Body of pancreas (tissue), 4 donors: ENCODE measurements at regions of chr10 and their contacts with region 1.

Region 1: GRCh38 chr10:29496341-29497162 is 138.2 kb downstream of the SVIL start:
- DNase-seq: peak; percentile 70 to 81 (median 76)
- ATAC-seq: peak; percentile 87
- H3K4me3 ChIP-seq: no peak overlapping the region
- H3K27ac ChIP-seq: no peak overlapping the region
- H3K4me1 ChIP-seq: no peaks in the 10 kb centered on the region
- H3K27me3 ChIP-seq: no peaks in the 10 kb centered on the region
- CTCF ChIP-seq: peak; percentile 76 to 93 (median 88)
- POLR2A ChIP-seq: no peak

Region 2: GRCh38 chr10:29377333-29377961 is 119.1 kb before region 1 on chr10:
- intact Hi-C with region 1: loop called (anchors 10 kb)
- DNase-seq: peak in 2 of 4 donors; percentile 22 to 23
- ATAC-seq: no peak
- H3K4me3 ChIP-seq: no peak overlapping the region
- H3K27ac ChIP-seq: no peak overlapping the region
- H3K4me1 ChIP-seq: peaks cover 3% of the 10 kb centered on the region
- H3K27me3 ChIP-seq: no peaks in the 10 kb centered on the region
- CTCF ChIP-seq: peak; percentile 43 to 93 (median 70)
- POLR2A ChIP-seq: no peak

Region 3: DNA sequence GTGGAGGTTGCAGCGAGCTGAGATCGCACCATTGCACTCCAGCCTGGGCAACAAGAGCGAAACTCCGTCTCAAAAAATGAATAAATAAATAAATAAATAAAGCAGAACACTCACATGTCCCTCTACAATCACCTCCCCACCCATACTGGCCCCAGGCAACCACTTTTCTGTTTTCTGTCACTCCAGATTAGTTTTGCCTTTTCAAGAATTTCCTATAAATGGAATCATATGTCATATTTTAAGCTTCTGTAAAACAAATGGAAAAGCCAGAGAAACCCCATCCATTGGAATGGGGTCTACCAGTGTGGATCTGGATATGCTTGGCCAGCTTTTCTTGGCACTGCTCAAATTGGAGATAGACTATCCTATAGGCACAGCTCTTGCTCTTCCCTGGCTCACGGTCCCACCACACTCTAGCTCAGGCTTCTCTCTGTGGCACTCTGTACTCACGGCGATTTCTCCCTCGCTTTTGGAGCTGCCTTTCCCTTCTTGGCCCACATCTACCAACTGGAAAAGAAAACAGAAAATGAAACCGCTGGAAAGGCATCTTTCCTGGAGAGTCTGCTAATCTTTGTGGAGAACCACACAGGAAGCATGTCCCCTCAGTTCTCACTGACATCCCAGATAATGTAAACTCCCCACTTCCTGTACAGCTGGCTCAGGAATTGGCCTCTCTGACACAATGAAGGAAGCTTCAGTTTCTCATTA is 352.7 kb after region 1 on chr10:
- intact Hi-C with region 1: no loop called
- DNase-seq: no peak
- ATAC-seq: no peak
- H3K4me3 ChIP-seq: no peak overlapping the region
- H3K27ac ChIP-seq: no peak overlapping the region
- H3K4me1 ChIP-seq: no peaks in the 10 kb centered on the region
- H3K27me3 ChIP-seq: no peaks in the 10 kb centered on the region
- CTCF ChIP-seq: no peak
- POLR2A ChIP-seq: no peak

Region 4: GRCh38 chr10:30687698-30688219 is 1191.2 kb after region 1 on chr10:
- intact Hi-C with region 1: loop called (anchors 10 kb)
- DNase-seq: peak; percentile 57 to 64 (median 61)
- ATAC-seq: peak; percentile 70
- H3K4me3 ChIP-seq: no peak overlapping the region
- H3K27ac ChIP-seq: no peak overlapping the region
- H3K4me1 ChIP-seq: no peaks in the 10 kb centered on the region
- H3K27me3 ChIP-seq: no peaks in the 10 kb centered on the region
- CTCF ChIP-seq: peak; percentile 31 to 67 (median 60)
- POLR2A ChIP-seq: no peak